Activated T-helper 2 cell treated with anti-CD3 and anti-CD28 coated beads, Interferon-gamma antibody, Interleukin-2, Interleukin-4, amounts not matched to agents 10 μg/mL and 5 μg/mL and 100 μg/mL, durations not matched to agents 14 hours and 24 hours and 36 hours (primary cell): ENCODE measurements at regions of chr16 and their contacts with region 1.

Region 1: GRCh38 chr16:11797166-11797956 is at the start of gene ZC3H7A:
- DNase-seq: peak; percentile 94
- H3K4me3 Mint-ChIP-seq: peak within 1 kb of the TSS; percentile 93
- H3K27ac Mint-ChIP-seq: peak within 1 kb of the TSS; percentile 96
- H3K4me1 Mint-ChIP-seq: peaks cover 67% of the 10 kb centered on the region
- H3K27me3 Mint-ChIP-seq: no peaks in the 10 kb centered on the region
- total RNA-seq, gene ZC3H7A: 63.4 and 71.1 TPM in 2 replicates

Region 2: GRCh38 chr16:11742539-11743307 is 54.6 kb before region 1 on chr16 and contains the start of gene TXNDC11:
- intact Hi-C with region 1: loop called (anchors 2 kb)
- DNase-seq: peak; percentile 99
- H3K4me3 Mint-ChIP-seq: peak within 1 kb of the TSS; percentile 93
- H3K27ac Mint-ChIP-seq: peak within 1 kb of the TSS; percentile 91
- H3K4me1 Mint-ChIP-seq: peaks cover 50% of the 10 kb centered on the region
- H3K27me3 Mint-ChIP-seq: no peaks in the 10 kb centered on the region
- total RNA-seq, gene TXNDC11: 48.0 and 53.0 TPM in 2 replicates

Region 3: GRCh38 chr16:11869657-11870228 is 72.4 kb after region 1 on chr16:
- intact Hi-C with region 1: no loop called
- DNase-seq: no peak
- H3K4me3 Mint-ChIP-seq: no peak overlapping the region
- H3K27ac Mint-ChIP-seq: no peak overlapping the region
- H3K4me1 Mint-ChIP-seq: peaks cover 5% of the 10 kb centered on the region
- H3K27me3 Mint-ChIP-seq: no peaks in the 10 kb centered on the region

Region 4: GRCh38 chr16:11901091-11901490 is 103.7 kb after region 1 on chr16:
- intact Hi-C with region 1: no loop called
- DNase-seq: no peak
- H3K4me3 Mint-ChIP-seq: no peak overlapping the region
- H3K27ac Mint-ChIP-seq: peak overlapping the region; percentile 63
- H3K4me1 Mint-ChIP-seq: peaks cover 23% of the 10 kb centered on the region
- H3K27me3 Mint-ChIP-seq: no peaks in the 10 kb centered on the region

Region 5: GRCh38 chr16:12026741-12027490 is 229.6 kb after region 1 on chr16:
- intact Hi-C with region 1: no loop called
- DNase-seq: no peak
- H3K4me3 Mint-ChIP-seq: no peak overlapping the region
- H3K27ac Mint-ChIP-seq: no peak overlapping the region
- H3K4me1 Mint-ChIP-seq: no peaks in the 10 kb centered on the region
- H3K27me3 Mint-ChIP-seq: no peaks in the 10 kb centered on the region